ENCODE measurements at regions of chr7 and their contacts with region 1.

Region 1: GRCh38 chr7:26667500-26668133 is 196.8 kb downstream of the SKAP2 start:
- DNase-seq: peak; percentile 85
- H3K4me3 ChIP-seq: no peak overlapping the region
- H3K4me3 Mint-ChIP-seq: no peak overlapping the region
- H3K27ac Mint-ChIP-seq: no peak overlapping the region
- H3K4me1 ChIP-seq: no peaks in the 10 kb centered on the region
- H3K4me1 Mint-ChIP-seq: no peaks in the 10 kb centered on the region
- H3K27me3 ChIP-seq: no peaks in the 10 kb centered on the region
- H3K27me3 Mint-ChIP-seq: no peaks in the 10 kb centered on the region
- CTCF ChIP-seq: peak; percentile 81 to 87

Region 2: GRCh38 chr7:25731068-25731845 is 936.4 kb before region 1 on chr7:
- CTCF ChIA-PET with region 1: no interaction called
- POLR2A ChIA-PET with region 1: no interaction called
- intact Hi-C with region 1: loop called (anchors 5 kb)
- DNase-seq: no peak
- H3K4me3 ChIP-seq: no peak overlapping the region
- H3K4me3 Mint-ChIP-seq: no peak overlapping the region
- H3K27ac Mint-ChIP-seq: no peak overlapping the region
- H3K4me1 ChIP-seq: no peaks in the 10 kb centered on the region
- H3K4me1 Mint-ChIP-seq: no peaks in the 10 kb centered on the region
- H3K27me3 ChIP-seq: no peaks in the 10 kb centered on the region
- H3K27me3 Mint-ChIP-seq: peaks cover 12% of the 10 kb centered on the region
- CTCF ChIP-seq: no peak

Region 3: DNA sequence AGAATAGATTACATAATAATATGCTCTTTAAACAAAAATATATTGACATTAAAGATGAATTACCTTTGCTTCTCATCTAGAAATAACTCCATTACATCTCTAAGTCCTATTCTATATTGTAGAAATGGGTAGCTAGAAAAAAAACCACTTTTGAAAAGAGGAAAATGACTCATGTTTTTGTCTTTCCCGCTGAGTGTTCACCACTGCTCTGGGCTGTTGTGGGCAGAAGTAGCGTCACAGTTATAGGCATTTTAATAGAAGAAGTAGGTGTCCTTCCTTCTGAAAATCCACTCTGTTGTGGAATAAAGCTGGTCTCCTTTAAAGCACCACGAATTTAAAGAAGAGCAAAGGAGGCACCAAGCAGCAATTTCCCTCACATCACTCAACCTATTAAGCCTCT is 633.2 kb before region 1 on chr7:
- CTCF ChIA-PET with region 1: no interaction called
- POLR2A ChIA-PET with region 1: no interaction called
- intact Hi-C with region 1: no loop called
- DNase-seq: no peak
- H3K4me3 ChIP-seq: no peak overlapping the region
- H3K4me3 Mint-ChIP-seq: no peak overlapping the region
- H3K27ac Mint-ChIP-seq: no peak overlapping the region
- H3K4me1 ChIP-seq: no peaks in the 10 kb centered on the region
- H3K4me1 Mint-ChIP-seq: peaks cover 8% of the 10 kb centered on the region
- H3K27me3 ChIP-seq: no peaks in the 10 kb centered on the region
- H3K27me3 Mint-ChIP-seq: no peaks in the 10 kb centered on the region
- CTCF ChIP-seq: no peak

Region 4: DNA sequence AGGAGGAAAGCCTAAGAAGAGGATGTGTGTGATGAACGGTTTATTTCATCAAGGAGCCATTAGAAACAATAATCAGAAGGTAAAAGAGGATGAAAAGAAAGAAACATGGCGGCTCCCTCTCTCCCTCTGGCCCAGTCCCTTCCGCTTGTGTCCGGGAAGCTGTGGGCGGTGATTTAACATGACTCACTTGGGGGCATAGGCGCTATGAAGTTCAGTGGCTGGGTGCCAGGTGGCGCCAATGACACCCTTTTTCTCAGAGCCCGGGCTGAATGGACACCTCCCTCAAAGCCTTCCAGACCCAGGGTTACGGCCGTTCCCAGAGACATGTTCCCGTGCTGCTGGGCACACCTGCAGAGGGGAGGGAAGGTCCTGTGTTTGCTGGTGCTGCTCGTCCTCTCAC is 47.3 kb before region 1 on chr7:
- CTCF ChIA-PET with region 1: no interaction called
- POLR2A ChIA-PET with region 1: no interaction called
- intact Hi-C with region 1: no loop called
- DNase-seq: peak in 1 of 2 experiments; percentile 17
- H3K4me3 ChIP-seq: no peak overlapping the region
- H3K4me3 Mint-ChIP-seq: no peak overlapping the region
- H3K27ac Mint-ChIP-seq: no peak overlapping the region
- H3K4me1 ChIP-seq: no peaks in the 10 kb centered on the region
- H3K4me1 Mint-ChIP-seq: no peaks in the 10 kb centered on the region
- H3K27me3 ChIP-seq: 0 out of 2 replicates have a peak, but pooled peaks cover 2% of the 10 kb centered on the region
- H3K27me3 Mint-ChIP-seq: peaks cover 3% of the 10 kb centered on the region
- CTCF ChIP-seq: peak in 1 of 2 experiments; percentile 2

Measured in Caco-2 (cell line).